GM10248 (cell line): ENCODE measurements at regions of chr20 and their contacts with region 1.

Region 1: DNA sequence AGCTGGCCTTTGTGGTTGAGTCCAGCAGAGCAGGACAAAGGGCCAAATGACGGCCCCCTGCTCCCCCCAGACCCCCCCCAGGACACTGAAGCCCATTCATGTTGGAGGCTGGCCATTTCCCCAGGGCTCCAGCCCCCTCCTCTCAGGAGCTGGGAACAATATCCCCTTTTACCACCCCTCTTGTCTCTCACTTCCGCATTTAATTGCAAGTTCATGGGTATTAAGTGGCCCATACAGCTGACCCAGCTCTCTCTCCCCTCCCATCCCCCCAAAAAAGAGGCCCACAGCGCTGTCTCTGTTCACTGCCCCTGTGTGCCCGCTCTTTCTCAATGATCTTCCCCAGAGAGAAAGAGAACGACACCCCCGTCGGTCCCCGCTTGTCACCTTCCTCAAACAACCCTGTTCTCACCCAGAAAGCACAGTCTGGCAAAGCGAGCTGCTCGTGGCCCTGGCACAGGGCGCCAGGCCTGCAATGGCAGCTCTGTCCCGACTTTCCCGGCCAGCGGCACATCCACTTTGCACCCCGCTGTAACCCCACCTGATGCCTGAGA is 30.4 kb downstream of the PREX1 start:
- DNase-seq: no peak
- CTCF ChIP-seq: no peak

Region 2: GRCh38 chr20:48722737-48723191 is 74.6 kb before region 1 on chr20:
- CTCF ChIA-PET with region 1: no interaction called
- POLR2A ChIA-PET with region 1: no interaction called
- DNase-seq: no peak
- CTCF ChIP-seq: no peak

Region 3: GRCh38 chr20:48812582-48813445 is 15.5 kb after region 1 on chr20:
- CTCF ChIA-PET with region 1: interaction called, 14 read pairs
- POLR2A ChIA-PET with region 1: interaction called, 4 read pairs
- DNase-seq: no peak
- CTCF ChIP-seq: no peak

Region 4: DNA sequence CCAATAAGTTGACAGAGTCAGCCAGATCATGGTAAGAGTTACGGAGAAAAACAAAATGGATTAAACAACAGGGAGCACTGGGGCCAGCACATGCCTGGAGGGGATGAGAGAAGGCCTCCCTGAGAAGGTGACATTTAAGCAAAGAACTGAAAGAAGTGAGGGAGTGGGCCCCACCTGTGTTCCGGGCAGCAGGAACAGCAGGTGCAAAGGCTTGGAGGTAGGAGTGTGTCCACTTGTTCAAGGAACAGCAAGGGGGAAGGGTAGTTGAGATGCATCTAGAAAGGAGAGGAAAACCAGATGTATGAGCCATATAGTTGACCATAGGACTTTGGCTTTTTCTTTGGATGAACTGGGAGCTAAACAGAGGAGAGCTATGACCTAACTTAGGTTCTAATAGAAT is 38.1 kb after region 1 on chr20:
- CTCF ChIA-PET with region 1: no interaction called
- POLR2A ChIA-PET with region 1: no interaction called
- DNase-seq: no peak
- CTCF ChIP-seq: no peak

Region 5: DNA sequence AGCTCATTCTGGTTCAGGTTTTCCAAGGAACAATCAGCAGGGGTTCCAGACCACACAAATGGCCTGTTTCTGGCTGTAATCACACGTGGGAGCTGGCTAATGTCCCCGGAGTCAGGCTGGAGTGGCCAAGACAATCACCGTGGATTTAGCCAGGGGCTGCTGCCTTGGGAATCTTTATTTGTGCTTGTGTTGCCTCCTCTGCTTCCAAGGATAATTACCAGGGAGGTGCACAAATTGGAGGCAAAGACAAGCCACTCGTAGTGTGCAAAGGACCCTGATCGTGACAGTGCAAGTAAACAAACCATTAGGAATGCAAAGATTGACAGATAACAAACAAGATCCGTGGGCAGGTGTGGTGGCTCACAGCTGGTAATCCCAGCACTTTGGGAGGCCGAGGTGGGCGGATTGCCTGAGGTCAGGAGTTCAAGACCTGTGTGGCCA is 607.8 kb after region 1 on chr20:
- CTCF ChIA-PET with region 1: no interaction called
- POLR2A ChIA-PET with region 1: no interaction called
- DNase-seq: no peak
- CTCF ChIP-seq: no peak